A549 (cell line): ENCODE measurements at regions of chr12 and their contacts with region 1.

Region 1: DNA sequence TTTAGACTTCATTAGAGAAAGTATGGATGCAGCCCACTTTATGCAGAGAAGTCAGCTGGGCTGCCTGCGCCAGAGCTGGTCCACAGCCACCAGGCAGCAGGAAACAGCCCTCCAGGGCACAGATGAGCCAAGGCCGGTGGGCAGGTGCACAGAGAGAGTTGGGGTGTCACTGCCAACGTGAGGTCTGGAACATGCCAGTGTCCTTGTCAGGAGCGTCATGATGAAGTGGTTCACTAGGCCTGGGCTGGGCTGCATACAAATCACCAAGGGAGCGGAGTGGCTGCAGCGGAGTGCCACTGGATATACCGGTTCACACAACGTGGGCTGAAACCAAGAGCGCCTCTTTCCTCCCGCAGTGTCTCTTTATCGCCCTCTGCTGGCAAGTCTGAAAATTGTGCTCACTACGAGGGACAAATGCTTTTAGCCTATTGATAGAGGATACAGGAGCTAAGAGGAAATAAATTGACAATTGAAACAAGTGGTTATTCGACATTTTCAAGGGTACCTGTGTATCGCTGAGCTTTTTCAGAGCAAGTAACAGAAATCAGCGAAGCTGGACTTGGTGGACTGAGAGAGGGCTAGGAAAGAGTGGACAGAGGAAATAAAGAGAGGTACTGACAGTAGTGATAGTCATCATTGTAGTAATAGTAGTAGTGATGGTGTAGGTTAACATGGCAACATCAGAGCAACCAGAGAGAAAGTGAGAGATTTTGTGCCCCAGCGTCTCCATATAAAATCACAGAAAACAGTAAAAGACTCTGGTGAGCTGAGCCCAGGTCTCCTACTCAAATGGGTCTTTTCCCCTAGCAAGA is 52.0 kb upstream of the ITPR2 start:
- DNase-seq: peak; percentile 60 to 81
- ATAC-seq: peak; percentile 96 to 97
- H3K4me3 ChIP-seq: no peak overlapping the region
- H3K27ac ChIP-seq: no peak overlapping the region
- H3K4me1 ChIP-seq: no peaks in the 10 kb centered on the region
- CTCF ChIP-seq: peak; percentile 85
- EP300 ChIP-seq: no peak
- POLR2A ChIP-seq: no peak
- RAD21 ChIP-seq: peak; percentile 71 to 81

Region 2: DNA sequence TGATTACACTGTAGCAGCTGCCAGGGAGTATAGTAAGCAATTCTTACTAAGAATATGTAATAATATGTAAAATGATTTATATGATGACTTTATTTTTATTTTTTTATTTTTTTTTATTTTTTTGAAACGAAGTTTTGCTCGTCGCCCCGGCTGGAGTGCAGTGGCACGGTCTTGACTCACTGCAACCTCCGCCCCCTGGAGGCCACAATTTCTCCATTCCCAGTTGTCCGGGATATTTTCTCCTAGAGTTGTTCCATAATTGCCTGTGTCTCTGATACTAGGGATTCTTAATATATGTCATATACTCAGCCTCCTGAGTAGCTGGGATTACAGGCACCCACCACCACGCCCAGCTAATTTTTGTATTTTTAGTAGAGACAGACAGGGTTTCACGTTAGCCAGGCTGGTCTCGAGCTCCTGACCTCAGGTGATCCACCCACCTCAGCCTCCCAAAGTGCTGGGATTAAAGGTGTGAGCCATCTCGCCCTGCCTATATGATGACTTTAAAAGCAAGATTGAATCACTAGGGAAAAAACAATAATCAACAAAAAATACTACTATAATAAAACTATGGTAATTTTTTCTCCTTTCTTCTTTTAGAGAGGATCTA is 39.8 kb before region 1 on chr12:
- CTCF ChIA-PET with region 1: interaction called, 14 read pairs
- POLR2A ChIA-PET with region 1: no interaction called
- DNase-seq: peak; percentile 50 to 62
- ATAC-seq: peak; percentile 87 to 96; a peak in 5 of 6 replicates
- H3K4me3 ChIP-seq: no peak overlapping the region
- H3K27ac ChIP-seq: no peak overlapping the region
- H3K4me1 ChIP-seq: no peaks in the 10 kb centered on the region
- CTCF ChIP-seq: peak; percentile 70
- EP300 ChIP-seq: no peak
- POLR2A ChIP-seq: no peak
- RAD21 ChIP-seq: peak; percentile 55 to 58

Region 3: GRCh38 chr12:26863502-26863901 is 21.5 kb before region 1 on chr12:
- CTCF ChIA-PET with region 1: interaction called, 46 read pairs
- POLR2A ChIA-PET with region 1: no interaction called
- DNase-seq: peak in 1 of 2 experiments; percentile 18
- ATAC-seq: no peak
- H3K4me3 ChIP-seq: no peak overlapping the region
- H3K27ac ChIP-seq: no peak overlapping the region
- H3K4me1 ChIP-seq: no peaks in the 10 kb centered on the region
- CTCF ChIP-seq: no peak
- EP300 ChIP-seq: no peak
- POLR2A ChIP-seq: no peak
- RAD21 ChIP-seq: no peak

Region 4: GRCh38 chr12:26896913-26897312 is 11.9 kb after region 1 on chr12:
- CTCF ChIA-PET with region 1: interaction called, 37 read pairs
- POLR2A ChIA-PET with region 1: no interaction called
- DNase-seq: no peak
- ATAC-seq: no peak
- H3K4me3 ChIP-seq: no peak overlapping the region
- H3K27ac ChIP-seq: no peak overlapping the region
- H3K4me1 ChIP-seq: no peaks in the 10 kb centered on the region
- CTCF ChIP-seq: no peak
- EP300 ChIP-seq: no peak
- POLR2A ChIP-seq: no peak
- RAD21 ChIP-seq: no peak